Heart right ventricle (tissue), 16 donors: ENCODE measurements at regions of chr1 and their contacts with region 1.

Region 1: DNA sequence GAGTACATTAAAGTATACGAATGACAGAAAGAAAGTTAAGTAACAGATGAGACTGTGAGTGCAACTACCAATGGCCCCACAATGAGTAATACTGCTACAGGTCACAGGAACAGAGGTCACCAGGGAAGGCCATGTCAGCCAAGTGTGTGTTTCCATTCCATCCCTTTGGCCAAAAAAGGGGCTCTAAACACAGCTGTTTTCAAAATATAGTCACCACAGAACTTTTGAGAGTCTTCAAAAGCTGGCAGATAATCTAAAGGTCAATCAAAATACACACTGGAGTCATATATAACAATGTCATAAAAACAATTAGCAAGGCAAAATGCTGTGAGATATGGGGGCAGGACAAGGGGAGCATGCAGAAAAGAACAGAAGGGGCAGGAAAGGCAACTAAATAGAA is 10.2 kb downstream of the USP24 start:
- DNase-seq: no peak
- ATAC-seq: peak in 5 of 8 donors; percentile 51 to 75 (median 65)
- H3K4me3 ChIP-seq: no peak overlapping the region
- H3K27ac ChIP-seq: peak overlapping the region in 3 of 10 donors; percentile 6 to 15 (median 8)
- H3K4me1 ChIP-seq: peaks cover 0 to 86% (median 68%) of the 10 kb centered on the region in 9 donors
- H3K27me3 ChIP-seq: no peaks in the 10 kb centered on the region
- CTCF ChIP-seq: no peak

Region 2: GRCh38 chr1:55117941-55118340 is 87.1 kb before region 1 on chr1:
- intact Hi-C with region 1: no loop called
- DNase-seq: no peak
- ATAC-seq: no peak
- H3K4me3 ChIP-seq: no peak overlapping the region
- H3K27ac ChIP-seq: no peak overlapping the region
- H3K4me1 ChIP-seq: no peaks in the 10 kb centered on the region
- H3K27me3 ChIP-seq: no peaks in the 10 kb centered on the region
- CTCF ChIP-seq: no peak

Region 3: GRCh38 chr1:55129194-55129728 is 75.7 kb before region 1 on chr1:
- intact Hi-C with region 1: no loop called
- DNase-seq: peak in 1 of 2 donors; percentile 28
- ATAC-seq: peak in 2 of 8 donors; percentile 39 to 61
- H3K4me3 ChIP-seq: no peak overlapping the region
- H3K27ac ChIP-seq: peak overlapping the region in 1 of 10 donors; percentile 32
- H3K4me1 ChIP-seq: peaks cover 0 to 24% (median 5%) of the 10 kb centered on the region in 9 donors
- H3K27me3 ChIP-seq: no peaks in the 10 kb centered on the region
- CTCF ChIP-seq: no peak

Region 4: DNA sequence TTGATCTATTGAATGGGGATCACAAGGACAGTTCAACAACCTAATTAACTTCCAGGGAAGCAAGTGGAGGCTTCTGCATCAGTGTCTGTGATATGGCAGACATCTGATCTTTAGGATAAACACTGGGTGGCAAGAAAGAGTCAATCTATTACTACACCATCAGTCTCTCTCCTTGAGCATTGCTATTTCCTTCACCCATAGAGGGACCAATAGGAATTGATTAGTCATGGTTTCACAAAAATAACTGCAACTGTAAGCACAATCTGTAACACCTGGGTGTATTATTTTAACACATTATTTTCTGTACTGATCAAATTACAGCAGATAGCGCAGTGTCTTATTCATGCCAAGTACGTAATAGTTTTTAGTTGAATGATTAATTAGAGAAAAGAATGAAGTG is 40.1 kb before region 1 on chr1:
- intact Hi-C with region 1: loop called in 3 of 10 experiments (anchors 5 kb)
- DNase-seq: no peak
- ATAC-seq: no peak
- H3K4me3 ChIP-seq: no peak overlapping the region
- H3K27ac ChIP-seq: no peak overlapping the region
- H3K4me1 ChIP-seq: peaks cover 0 to 24% (median 4%) of the 10 kb centered on the region in 9 donors
- H3K27me3 ChIP-seq: no peaks in the 10 kb centered on the region
- CTCF ChIP-seq: no peak

Region 5: DNA sequence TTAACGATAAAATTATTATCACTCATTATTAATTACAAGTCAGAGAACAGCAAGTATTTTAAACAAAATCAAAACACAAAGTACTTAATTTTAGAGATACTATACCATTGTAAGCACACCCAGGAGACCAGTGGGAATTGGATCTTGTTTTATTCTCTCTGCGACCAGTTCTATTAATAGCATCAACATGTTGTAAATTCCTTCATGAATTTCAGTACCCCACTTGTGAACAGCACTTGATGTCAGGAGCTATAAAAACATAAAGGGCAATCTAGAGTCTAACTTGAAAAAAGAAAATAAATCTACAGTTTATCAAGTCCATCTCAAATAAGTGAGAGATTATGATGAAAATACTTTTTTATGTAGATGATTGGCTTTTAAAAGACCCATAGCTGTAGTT is 32.7 kb before region 1 on chr1:
- intact Hi-C with region 1: loop called in 3 of 10 experiments (anchors 5 kb)
- DNase-seq: no peak
- ATAC-seq: peak in 5 of 8 donors; percentile 44 to 77 (median 68)
- H3K4me3 ChIP-seq: no peak overlapping the region
- H3K27ac ChIP-seq: peak overlapping the region in 4 of 10 donors; percentile 15 to 25 (median 20)
- H3K4me1 ChIP-seq: peaks cover 0 to 47% (median 7%) of the 10 kb centered on the region in 9 donors
- H3K27me3 ChIP-seq: no peaks in the 10 kb centered on the region
- CTCF ChIP-seq: no peak